ENCODE measurements at regions of chr1 and their contacts with region 1.

Region 1: DNA sequence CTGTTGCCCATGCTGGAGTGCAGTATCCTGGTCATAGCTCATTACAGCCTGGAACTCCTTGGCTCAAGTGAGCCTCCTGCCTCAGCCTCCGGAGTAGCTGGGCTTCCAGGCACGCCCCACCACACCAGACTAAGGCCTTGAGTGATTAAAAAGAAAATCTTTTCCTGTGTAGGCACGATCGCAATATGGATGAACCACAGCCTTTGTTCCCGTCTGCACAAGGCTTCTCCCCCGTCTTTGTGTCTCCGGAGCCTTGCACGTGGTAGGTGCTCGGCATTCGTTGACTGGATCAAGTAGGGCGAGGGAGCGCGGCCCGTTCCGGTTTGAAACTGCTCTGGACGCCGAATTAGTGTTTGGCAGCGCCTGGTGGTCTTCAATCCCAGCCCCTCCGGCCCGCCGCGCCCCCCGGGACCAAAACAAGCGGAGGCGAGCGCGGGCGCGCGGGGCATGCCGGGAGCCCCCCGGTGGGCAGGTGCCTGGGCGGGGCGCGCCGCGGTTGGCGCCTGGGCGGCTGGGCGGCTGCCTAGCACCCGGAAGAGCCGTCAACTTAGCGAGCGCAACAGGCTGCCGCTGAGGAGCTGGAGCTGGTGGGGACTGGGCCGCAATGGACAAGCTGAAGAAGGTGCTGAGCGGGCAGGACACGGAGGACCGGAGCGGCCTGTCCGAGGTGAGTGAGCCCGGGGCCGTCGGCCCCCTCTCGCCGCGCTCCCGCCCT is at the start of gene SFT2D2:
- DNase-seq: peak; percentile 35 to 95 (median 64)

Region 2: GRCh38 chr1:168178638-168179437 is 46.8 kb before region 1 on chr1 and contains the start of gene TIPRL:
- intact Hi-C with region 1: loop called (anchors 5 kb)
- DNase-seq: peak; percentile 91 to 99 (median 96)

Region 3: GRCh38 chr1:168312718-168313604 is 87.3 kb after region 1 on chr1:
- intact Hi-C with region 1: no loop called
- DNase-seq: peak in 1 of 10 donors; percentile 80

Measured in posterior cingulate gyrus (tissue), 11 donors.